CD14-positive monocyte (primary cell): ENCODE measurements at regions of chr4 and their contacts with region 1.

Region 1: DNA sequence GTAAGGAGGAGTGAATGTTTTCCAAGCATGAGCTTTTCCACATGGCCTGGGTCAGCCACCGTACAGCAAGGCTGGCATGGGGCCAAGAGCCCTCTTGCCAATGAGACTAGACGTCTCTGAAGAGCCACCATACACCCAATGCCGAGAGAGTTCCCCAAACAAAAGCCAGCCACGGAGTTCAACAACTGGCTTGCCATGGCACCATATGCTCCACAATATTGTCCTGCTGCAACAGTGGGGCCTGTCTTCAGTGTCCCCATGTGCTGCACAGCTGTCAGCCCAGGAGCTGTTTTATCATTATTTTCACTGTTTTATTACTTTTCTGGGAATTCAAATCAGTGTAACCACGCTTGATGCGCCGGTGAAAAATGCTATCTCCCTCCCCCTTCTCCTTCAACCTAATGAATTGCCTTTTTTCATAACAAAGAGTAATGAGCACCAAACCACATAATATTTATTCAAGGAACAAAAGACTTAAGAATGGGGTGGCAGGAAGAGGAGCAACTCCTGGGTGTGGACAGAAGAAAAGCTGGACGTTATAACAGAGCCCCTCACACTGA is 18.4 kb downstream of the MAML3 start:
- DNase-seq: no peak
- H3K4me3 ChIP-seq: no peak overlapping the region
- H3K4me3 Mint-ChIP-seq: no peak overlapping the region
- H3K27ac ChIP-seq: no peak overlapping the region
- H3K27ac Mint-ChIP-seq: peak overlapping the region in 2 of 7 donors; percentile 48 to 85
- H3K4me1 ChIP-seq: peaks cover 19 to 34% of the 10 kb centered on the region in 2 donors
- H3K4me1 Mint-ChIP-seq: peaks cover 43% of the 10 kb centered on the region
- H3K27me3 ChIP-seq: no peaks in the 10 kb centered on the region
- H3K27me3 Mint-ChIP-seq: no peaks in the 10 kb centered on the region
- CTCF ChIP-seq: no peak

Region 2: DNA sequence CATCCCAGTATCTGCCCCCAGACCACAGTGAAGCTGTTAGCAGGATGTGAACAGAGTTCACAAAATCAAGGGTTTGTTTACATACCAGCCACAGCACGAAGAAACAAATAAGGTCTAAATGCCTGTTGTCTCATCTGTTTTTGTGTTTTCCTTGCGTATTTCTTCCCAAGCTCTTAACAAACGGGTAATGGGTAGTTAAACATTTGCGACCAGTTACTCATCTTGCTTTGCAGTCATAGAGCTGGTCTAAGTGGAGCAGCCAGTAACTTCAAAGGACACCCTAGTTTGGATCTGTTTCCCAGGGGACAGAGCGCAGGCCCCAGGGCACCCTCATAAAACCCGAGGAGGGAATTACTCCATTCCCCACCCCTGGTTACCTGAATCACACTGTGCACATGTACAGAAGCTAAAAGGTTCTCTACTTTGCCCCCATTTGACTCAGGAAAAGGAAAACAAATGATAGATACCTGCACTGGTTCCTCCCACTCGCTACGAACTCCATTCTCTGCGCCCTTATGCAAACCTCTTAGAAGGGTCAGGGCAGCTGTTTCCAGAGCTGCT is 50.5 kb before region 1 on chr4:
- intact Hi-C with region 1: loop called in 1 of 2 experiments (anchors 10 kb)
- DNase-seq: no peak
- H3K4me3 ChIP-seq: no peak overlapping the region
- H3K4me3 Mint-ChIP-seq: no peak overlapping the region
- H3K27ac ChIP-seq: no peak overlapping the region
- H3K27ac Mint-ChIP-seq: no peak overlapping the region
- H3K4me1 ChIP-seq: peaks cover 12 to 16% of the 10 kb centered on the region in 2 donors
- H3K4me1 Mint-ChIP-seq: peaks cover 30% of the 10 kb centered on the region
- H3K27me3 ChIP-seq: no peaks in the 10 kb centered on the region
- H3K27me3 Mint-ChIP-seq: no peaks in the 10 kb centered on the region
- CTCF ChIP-seq: no peak

Region 3: DNA sequence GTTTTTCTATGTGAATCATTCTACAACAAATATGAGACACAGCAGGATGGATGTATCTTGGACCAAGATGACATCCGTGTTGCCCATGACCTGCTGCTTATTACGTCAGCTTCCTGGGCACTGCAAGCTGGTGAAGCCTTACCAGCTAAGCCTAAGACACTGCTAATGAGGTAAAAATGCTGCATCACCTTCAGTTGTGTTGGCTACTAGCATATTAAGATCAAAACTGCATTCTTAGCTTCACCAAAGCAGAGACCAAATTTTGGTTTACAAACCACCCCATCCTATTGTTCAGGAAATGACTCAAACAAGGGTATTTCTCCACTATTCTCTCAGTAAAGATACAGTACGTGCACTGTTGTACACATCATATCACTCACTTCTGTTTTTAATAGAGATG is 31.9 kb before region 1 on chr4:
- intact Hi-C with region 1: loop called in 1 of 2 experiments (anchors 5 kb)
- DNase-seq: peak; percentile 92 to 98 (median 97)
- H3K4me3 ChIP-seq: peak overlapping the region in 1 of 3 experiments; percentile 5
- H3K4me3 Mint-ChIP-seq: no peak overlapping the region
- H3K27ac ChIP-seq: peak overlapping the region; percentile 61 to 86
- H3K27ac Mint-ChIP-seq: peak overlapping the region; percentile 83 to 96 (median 91)
- H3K4me1 ChIP-seq: peaks cover 45 to 51% of the 10 kb centered on the region in 2 donors
- H3K4me1 Mint-ChIP-seq: peaks cover 65% of the 10 kb centered on the region
- H3K27me3 ChIP-seq: no peaks in the 10 kb centered on the region
- H3K27me3 Mint-ChIP-seq: no peaks in the 10 kb centered on the region
- CTCF ChIP-seq: no peak